Tibial artery (tissue), 4 donors: ENCODE measurements at regions of chr12 and their contacts with region 1.

Region 1: DNA sequence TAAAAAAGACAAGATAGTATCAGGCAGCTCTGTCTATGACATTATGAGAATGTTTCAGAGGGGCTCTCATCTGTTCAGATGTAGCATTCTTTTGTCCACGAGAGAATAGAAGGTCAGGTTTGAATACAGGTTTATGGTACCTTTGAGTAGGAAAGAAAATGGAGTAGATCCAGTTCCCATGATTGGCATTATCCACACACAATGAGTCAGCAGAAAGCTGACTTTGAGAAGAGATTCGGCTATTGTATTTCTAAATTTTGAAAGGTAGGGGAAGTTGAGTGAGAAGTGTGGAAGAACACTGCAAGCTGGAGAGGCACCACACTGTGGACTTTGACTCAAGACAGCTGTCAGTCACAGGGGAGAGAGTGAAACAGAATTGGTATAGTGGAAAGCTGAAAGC is 135.4 kb downstream of the SYT10 start:
- DNase-seq: no peak
- H3K4me3 ChIP-seq: no peak overlapping the region
- H3K27ac ChIP-seq: no peak overlapping the region
- H3K4me1 ChIP-seq: no peaks in the 10 kb centered on the region
- H3K27me3 ChIP-seq: no peaks in the 10 kb centered on the region
- CTCF ChIP-seq: no peak

Region 2: DNA sequence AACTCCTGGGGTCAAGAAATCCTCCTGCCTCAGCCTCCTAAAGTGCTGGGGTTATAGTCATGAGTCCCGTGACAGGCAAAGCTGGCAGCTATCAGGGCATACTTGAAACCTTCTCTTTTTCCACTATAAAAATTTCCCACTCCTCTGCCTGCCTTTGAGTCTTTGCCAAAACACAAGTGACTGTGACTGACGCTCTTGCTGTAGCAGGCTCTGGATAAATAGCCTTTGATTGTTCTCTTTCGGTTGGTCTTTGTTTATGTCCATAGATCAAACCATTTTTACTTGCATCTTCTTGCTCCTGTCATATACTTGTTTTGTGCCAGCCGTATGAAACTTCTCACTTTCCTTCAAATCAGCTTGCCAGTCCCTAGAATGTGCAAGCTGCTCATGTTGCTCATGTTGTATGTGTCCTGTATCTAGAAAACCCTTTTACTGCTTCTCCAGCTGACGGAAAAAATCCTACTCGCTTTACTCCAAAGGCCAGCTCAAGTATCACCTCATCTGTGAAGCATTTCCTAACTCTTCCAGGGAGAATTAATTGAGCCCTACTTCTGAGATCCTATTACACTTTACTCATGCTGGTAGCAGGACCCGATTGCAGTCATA is 1271.9 kb before region 1 on chr12:
- intact Hi-C with region 1: loop called (anchors 10 kb)
- DNase-seq: no peak
- H3K4me3 ChIP-seq: no peak overlapping the region
- H3K27ac ChIP-seq: no peak overlapping the region
- H3K4me1 ChIP-seq: peaks cover 0 to 15% (median 0%) of the 10 kb centered on the region in 4 donors
- H3K27me3 ChIP-seq: no peaks in the 10 kb centered on the region
- CTCF ChIP-seq: no peak

Region 3: GRCh38 chr12:33253178-33253577 is 51.0 kb before region 1 on chr12:
- intact Hi-C with region 1: no loop called
- DNase-seq: no peak
- H3K4me3 ChIP-seq: no peak overlapping the region
- H3K27ac ChIP-seq: no peak overlapping the region
- H3K4me1 ChIP-seq: no peaks in the 10 kb centered on the region
- H3K27me3 ChIP-seq: no peaks in the 10 kb centered on the region
- CTCF ChIP-seq: no peak

Region 4: GRCh38 chr12:33357158-33357557 is 53.0 kb after region 1 on chr12:
- intact Hi-C with region 1: no loop called
- DNase-seq: no peak
- H3K4me3 ChIP-seq: no peak overlapping the region
- H3K27ac ChIP-seq: no peak overlapping the region
- H3K4me1 ChIP-seq: no peaks in the 10 kb centered on the region
- H3K27me3 ChIP-seq: no peaks in the 10 kb centered on the region
- CTCF ChIP-seq: no peak